ENCODE measurements at regions of chr3 and their contacts with region 1.

Region 1: DNA sequence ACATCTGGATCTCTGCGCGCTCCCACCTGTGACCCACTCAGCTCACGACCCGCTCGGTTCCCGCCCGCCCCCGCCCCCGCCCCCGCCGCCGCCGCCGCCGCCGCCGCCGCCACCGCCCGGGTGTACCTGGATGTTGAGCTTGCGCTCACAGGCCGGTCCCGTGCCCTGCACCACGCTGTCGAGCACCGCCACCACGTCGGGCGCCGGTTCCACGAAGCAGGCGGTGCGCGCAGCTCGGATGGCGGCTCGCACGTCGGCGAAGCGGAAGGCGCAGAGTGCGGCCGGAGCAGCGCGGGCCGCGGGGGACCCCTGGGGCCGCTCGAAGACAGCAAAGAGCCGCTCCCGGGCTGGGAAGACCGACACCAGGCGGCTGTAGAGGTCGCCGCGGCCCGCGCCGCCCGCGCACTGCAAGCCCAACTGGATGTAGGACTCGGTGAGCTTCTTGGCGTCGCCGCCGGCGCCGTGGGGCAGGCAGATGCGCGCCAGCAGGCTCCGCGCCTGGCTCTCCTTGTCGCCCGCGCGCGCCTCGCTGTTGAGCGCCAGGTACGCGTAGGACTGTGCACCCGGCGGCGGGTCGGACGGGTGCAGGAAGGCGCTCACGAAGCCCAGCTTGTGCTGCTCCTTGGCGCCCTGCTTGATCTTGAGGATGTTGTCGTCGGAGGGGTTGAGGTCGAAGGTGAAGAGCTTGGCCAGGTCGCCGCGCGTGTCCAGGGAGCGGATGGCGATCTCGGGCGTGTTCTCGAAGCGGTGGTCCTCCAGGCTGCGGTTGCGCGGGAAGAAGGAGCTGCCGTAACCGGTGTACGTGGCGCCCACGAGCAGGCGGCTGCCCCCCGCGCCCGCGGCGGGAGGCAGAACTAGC is 1.0 kb downstream of the PLXND1 start:
- DNase-seq: peak in 34 of 35 experiments; percentile 17 to 68 (median 46)
- ATAC-seq: peak; percentile 53 to 68 (median 59)
- H3K4me3 ChIP-seq: peak overlapping the region; percentile 48 to 64
- H3K4me3 Mint-ChIP-seq: peak overlapping the region; percentile 89 to 98 (median 92)
- H3K27ac ChIP-seq: no peak overlapping the region
- H3K27ac Mint-ChIP-seq: peak overlapping the region; percentile 82
- H3K4me1 ChIP-seq: peaks cover 7 to 37% of the 10 kb centered on the region in 2 experiments
- H3K4me1 Mint-ChIP-seq: peaks cover 28 to 43% (median 39%) of the 10 kb centered on the region in 3 donors
- H3K27me3 ChIP-seq: peaks cover 0 to 42% of the 10 kb centered on the region in 2 experiments
- H3K27me3 Mint-ChIP-seq: peaks cover 6 to 9% of the 10 kb centered on the region in 2 donors

Region 2: GRCh38 chr3:129490242-129491045 is 115.0 kb before region 1 on chr3:
- CTCF ChIA-PET with region 1: interaction called in 1 of 2 experiments, 10 read pairs
- POLR2A ChIA-PET with region 1: no interaction called
- DNase-seq: peak; percentile 4 to 75 (median 41)
- ATAC-seq: peak; percentile 82 to 96 (median 93)
- H3K4me3 ChIP-seq: no peak overlapping the region
- H3K4me3 Mint-ChIP-seq: no peak overlapping the region
- H3K27ac ChIP-seq: no peak overlapping the region
- H3K27ac Mint-ChIP-seq: no peak overlapping the region
- H3K4me1 ChIP-seq: peaks cover 0 to 4% of the 10 kb centered on the region in 2 experiments
- H3K4me1 Mint-ChIP-seq: peaks cover 0 to 2% (median 0%) of the 10 kb centered on the region in 3 donors
- H3K27me3 ChIP-seq: no peaks in the 10 kb centered on the region
- H3K27me3 Mint-ChIP-seq: no peaks in the 10 kb centered on the region

Region 3: DNA sequence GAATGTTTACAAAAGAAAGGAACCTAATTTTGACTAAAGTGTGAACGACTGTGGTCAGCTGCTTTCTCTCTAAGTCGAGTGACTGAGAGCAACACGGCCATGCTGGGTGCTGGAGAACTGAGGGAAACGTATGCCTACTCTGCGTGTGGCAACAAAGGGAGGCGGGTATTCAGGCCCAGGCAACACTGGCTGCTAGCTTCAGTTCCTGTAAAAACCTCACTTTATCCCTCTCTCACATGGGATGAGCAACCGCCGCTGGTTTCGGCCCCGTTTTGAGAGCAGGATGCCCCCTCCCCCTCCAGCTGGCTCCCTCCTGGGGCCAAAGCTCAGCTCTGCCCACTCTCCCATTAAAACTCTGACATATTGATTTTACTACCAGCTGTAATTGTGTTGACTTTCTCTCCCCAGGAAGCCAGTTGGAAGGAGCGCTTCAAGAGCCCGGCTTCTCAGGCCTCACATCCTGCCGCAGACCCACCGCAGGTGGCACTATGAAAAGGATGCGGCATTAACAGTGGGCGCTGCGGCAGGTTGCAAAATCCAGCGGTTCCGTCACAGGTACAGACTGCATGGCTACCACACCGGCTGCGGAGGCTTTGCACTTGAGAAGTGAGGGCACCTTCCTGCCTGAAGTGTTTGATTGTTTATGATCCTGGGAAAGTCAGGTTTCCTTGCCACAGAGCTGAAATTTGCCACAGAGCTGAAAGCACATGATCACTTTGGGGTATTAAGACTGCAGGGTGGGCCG is 11.7 kb before region 1 on chr3:
- CTCF ChIA-PET with region 1: no interaction called
- POLR2A ChIA-PET with region 1: interaction called in 1 of 2 experiments, 11 read pairs
- DNase-seq: peak; percentile 27 to 74 (median 52)
- ATAC-seq: peak; percentile 60 to 84 (median 76)
- H3K4me3 ChIP-seq: peak overlapping the region; percentile 3 to 68
- H3K4me3 Mint-ChIP-seq: peak overlapping the region; percentile 21 to 91 (median 63)
- H3K27ac ChIP-seq: no peak overlapping the region
- H3K27ac Mint-ChIP-seq: peak overlapping the region; percentile 59 to 81
- H3K4me1 ChIP-seq: peaks cover 17 to 61% of the 10 kb centered on the region in 2 experiments
- H3K4me1 Mint-ChIP-seq: peaks cover 22 to 48% (median 32%) of the 10 kb centered on the region in 3 donors
- H3K27me3 ChIP-seq: peaks cover 0 to 24% of the 10 kb centered on the region in 2 experiments
- H3K27me3 Mint-ChIP-seq: no peaks in the 10 kb centered on the region

Region 4: DNA sequence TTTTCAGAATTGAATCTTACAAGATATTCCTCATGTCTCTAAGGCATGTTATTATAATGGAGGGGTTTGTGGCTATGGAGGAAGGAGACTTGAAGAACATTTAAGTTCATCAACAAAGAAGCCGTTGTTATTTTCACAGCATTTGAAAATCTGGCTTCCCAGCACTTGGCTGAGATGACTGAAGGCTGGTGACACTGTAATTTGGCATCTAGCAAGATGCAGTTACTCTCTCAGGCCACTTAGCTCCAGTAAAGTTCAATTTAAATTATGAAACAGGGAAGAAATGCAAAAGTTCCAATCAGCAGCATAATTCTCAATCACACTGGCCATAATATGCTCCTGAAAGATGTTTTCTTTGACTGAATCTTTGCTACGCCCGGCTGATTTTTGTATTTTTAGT is 1636.8 kb after region 1 on chr3:
- CTCF ChIA-PET with region 1: no interaction called
- POLR2A ChIA-PET with region 1: no interaction called
- DNase-seq: no peak
- ATAC-seq: no peak
- H3K4me3 ChIP-seq: no peak overlapping the region
- H3K4me3 Mint-ChIP-seq: no peak overlapping the region
- H3K27ac ChIP-seq: no peak overlapping the region
- H3K27ac Mint-ChIP-seq: no peak overlapping the region
- H3K4me1 ChIP-seq: no peaks in the 10 kb centered on the region
- H3K4me1 Mint-ChIP-seq: no peaks in the 10 kb centered on the region
- H3K27me3 ChIP-seq: no peaks in the 10 kb centered on the region
- H3K27me3 Mint-ChIP-seq: peaks cover 0 to 5% of the 10 kb centered on the region in 2 donors